K562 (cell line): ENCODE measurements at regions of chr6 and their contacts with region 1.

Region 1: DNA sequence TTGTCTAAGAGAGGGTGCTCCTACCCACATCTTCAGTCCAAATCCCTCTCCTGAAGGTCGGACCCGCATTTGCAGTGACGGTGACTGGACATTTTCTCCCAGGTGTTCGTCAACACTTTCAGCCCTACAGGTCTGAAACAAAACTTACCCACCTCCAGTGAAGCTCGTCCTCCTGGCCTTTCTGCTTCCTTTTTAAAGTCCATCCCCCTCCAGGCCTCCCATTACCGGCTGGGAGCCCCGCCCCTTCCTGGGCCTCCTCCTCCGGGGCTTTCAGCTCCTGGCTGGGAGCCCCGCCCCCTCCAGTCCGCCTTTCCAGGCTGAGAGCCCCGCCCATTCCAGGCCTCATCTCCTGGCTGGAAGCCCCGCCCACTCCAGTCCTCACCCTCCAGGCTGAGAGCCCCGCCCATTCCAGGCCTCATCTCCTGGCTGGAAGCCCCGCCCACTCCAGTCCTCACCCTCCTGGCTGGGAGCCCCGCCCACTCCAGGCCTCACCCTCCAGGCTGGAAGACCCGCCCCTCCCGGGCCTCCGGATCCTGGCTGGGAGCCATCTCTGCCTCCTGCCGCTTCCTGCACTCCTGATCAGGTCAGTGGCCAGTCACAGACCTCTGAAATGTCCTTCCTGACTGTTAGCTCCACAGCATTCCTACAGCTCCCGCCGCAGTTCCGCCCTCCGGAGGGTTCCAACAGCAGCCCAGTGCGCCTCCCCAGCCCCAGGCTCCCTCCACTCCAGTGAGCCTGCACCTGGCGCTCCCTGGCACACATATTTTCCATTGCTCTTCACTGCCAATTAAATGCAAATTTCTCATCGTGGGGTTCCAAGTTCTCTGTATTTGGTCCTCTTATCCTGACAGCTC is 98.5 kb downstream of the LY86 start:
- DNase-seq: peak; percentile 100
- ATAC-seq: peak; percentile 92
- H3K4me3 ChIP-seq: peak overlapping the region; percentile 47
- H3K27ac ChIP-seq: peak overlapping the region; percentile 81
- H3K4me1 ChIP-seq: peaks cover 28 to 62% of the 10 kb centered on the region in 2 experiments
- H3K27me3 ChIP-seq: no peaks in the 10 kb centered on the region
- CTCF ChIP-seq: no peak
- EP300 ChIP-seq: no peak; the same call in 1 of the 2 replicates
- POLR2A ChIP-seq: peak; percentile 90
- RAD21 ChIP-seq: no peak

Region 2: DNA sequence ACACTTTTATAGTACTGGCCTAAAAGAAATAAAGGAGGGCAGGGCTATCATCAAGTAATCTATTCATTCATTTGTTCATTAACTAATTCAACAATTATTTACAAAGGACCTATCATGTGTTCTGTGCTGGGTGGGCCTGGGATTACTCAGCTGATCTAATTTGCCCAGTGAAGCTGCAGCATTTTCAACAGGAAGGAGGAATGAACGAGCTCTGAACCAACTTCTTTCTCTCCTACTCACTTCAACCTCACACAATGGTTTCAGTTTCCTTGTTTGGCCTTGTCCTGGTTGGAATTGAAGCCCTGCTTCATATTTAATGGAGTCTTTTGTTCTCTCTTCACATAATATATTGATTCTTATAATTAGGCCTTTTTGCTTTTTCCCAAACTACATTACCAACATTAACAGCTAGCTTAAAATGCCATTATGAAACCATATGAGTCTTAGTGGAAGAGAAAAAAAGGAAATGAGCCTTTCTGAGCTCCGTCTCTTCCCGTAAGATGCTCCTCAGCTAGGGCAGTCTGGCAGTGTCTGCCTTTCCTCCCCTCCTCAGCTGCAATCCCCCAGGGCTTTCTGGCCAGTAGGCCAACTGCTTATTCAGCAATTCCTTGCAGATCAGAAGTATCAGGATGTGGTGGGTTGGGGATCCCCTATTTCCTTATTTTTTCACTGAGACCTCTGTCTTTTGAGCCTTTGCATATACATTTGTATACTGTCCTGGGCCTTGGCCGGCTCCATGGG is 600.9 kb before region 1 on chr6:
- CTCF ChIA-PET with region 1: no interaction called
- POLR2A ChIA-PET with region 1: no interaction called
- in situ Hi-C with region 1: no loop called
- intact Hi-C with region 1: no loop called
- DNase-seq: no peak
- ATAC-seq: no peak
- H3K4me3 ChIP-seq: no peak overlapping the region
- H3K27ac ChIP-seq: no peak overlapping the region
- H3K4me1 ChIP-seq: no peaks in the 10 kb centered on the region
- H3K27me3 ChIP-seq: no peaks in the 10 kb centered on the region
- CTCF ChIP-seq: no peak
- EP300 ChIP-seq: no peak
- POLR2A ChIP-seq: no peak
- RAD21 ChIP-seq: no peak

Region 3: GRCh38 chr6:6246544-6246943 is 440.4 kb before region 1 on chr6:
- CTCF ChIA-PET with region 1: no interaction called
- POLR2A ChIA-PET with region 1: no interaction called
- in situ Hi-C with region 1: no loop called
- intact Hi-C with region 1: no loop called
- DNase-seq: no peak
- ATAC-seq: no peak
- H3K4me3 ChIP-seq: no peak overlapping the region
- H3K27ac ChIP-seq: no peak overlapping the region
- H3K4me1 ChIP-seq: no peaks in the 10 kb centered on the region
- H3K27me3 ChIP-seq: peaks cover 0 to 4% of the 10 kb centered on the region in 2 experiments; a peak in 2 of 5 replicates
- CTCF ChIP-seq: no peak
- EP300 ChIP-seq: no peak
- POLR2A ChIP-seq: no peak
- RAD21 ChIP-seq: no peak

Region 4: DNA sequence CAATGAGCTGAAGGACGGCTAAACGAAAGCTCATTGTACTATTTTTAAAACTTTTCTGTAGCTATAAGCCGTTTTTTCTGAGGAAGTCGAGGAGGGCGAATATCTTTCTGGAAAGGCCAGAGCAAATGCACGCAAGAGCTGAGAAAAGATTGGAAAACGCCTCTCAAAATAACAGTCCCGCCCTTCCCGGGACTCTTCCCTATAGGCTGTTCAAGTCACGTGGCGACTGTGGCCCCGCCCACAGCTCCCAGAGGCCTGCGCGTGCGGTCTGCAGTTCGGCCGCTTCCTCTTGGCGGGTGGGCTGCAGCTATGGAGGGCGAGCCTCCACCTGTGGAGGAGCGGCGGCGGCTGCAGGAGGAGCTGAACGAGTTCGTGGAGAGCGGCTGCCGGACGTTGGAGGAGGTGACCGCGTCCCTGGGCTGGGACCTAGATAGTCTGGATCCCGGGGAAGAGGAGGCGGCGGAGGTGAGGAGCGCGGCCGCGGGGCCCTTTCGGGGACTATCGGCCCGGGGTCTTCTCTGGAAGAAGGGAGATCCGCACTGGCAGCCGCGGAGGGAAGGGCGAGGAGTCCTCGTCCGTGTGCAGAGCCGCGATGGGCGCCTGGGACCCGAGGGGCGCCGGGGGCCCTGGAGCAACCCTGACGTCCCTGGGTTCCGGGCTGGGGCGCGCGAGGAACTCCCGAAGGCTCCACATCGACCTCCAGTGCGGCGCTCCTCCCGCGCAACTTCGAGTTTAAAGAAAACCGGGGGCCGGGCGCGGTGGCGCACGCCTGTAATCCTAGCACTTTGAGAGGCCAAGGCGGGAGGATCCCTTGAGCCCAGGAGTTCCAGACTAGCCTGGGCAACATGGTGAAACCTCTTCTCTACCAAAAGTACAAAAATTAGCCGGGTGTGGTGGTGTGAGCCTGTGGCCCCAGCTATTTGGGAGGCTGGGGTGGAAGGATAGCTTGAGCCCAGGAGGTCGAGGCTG is 903.3 kb after region 1 on chr6 and contains the start of gene SNRNP48:
- CTCF ChIA-PET with region 1: no interaction called
- POLR2A ChIA-PET with region 1: no interaction called
- in situ Hi-C with region 1: no loop called
- intact Hi-C with region 1: loop called (anchors 10 kb)
- DNase-seq: peak; percentile 95 to 98 (median 98)
- ATAC-seq: peak; percentile 99
- H3K4me3 ChIP-seq: peak within 1 kb of the TSS; percentile 89
- H3K27ac ChIP-seq: peak within 1 kb of the TSS; percentile 76
- H3K4me1 ChIP-seq: peaks cover 8 to 12% of the 10 kb centered on the region in 2 experiments; a peak in 4 of 5 replicates
- H3K27me3 ChIP-seq: peaks cover 0 to 4% of the 10 kb centered on the region in 2 experiments; a peak in 1 of 5 replicates
- CTCF ChIP-seq: no peak
- EP300 ChIP-seq: no peak
- POLR2A ChIP-seq: peak; percentile 98
- RAD21 ChIP-seq: no peak; a peak in 1 of 4 replicates
- polyA plus RNA-seq, gene SNRNP48: 6.2 to 8.7 TPM